A549 (cell line): ENCODE measurements at regions of chr10 and their contacts with region 1.

Region 1: GRCh38 chr10:79195091-79195923 is 126.5 kb downstream of the ZMIZ1 start:
- DNase-seq: peak; percentile 77 to 88
- ATAC-seq: peak; percentile 77 to 87
- H3K4me3 ChIP-seq: no peak overlapping the region
- H3K27ac ChIP-seq: peak overlapping the region; percentile 75 to 88
- H3K4me1 ChIP-seq: peaks cover 50% of the 10 kb centered on the region
- CTCF ChIP-seq: peak; percentile 93
- EP300 ChIP-seq: no peak
- POLR2A ChIP-seq: no peak
- RAD21 ChIP-seq: peak; percentile 94 to 99

Region 2: GRCh38 chr10:78211561-78212051 is 983.7 kb before region 1 on chr10:
- CTCF ChIA-PET with region 1: interaction called, 11 read pairs
- POLR2A ChIA-PET with region 1: no interaction called
- DNase-seq: peak; percentile 38 to 54
- ATAC-seq: peak in 1 of 2 experiments; percentile 78; a peak in 3 of 6 replicates
- H3K4me3 ChIP-seq: no peak overlapping the region
- H3K27ac ChIP-seq: peak overlapping the region; percentile 20 to 81; a peak in 5 of 6 replicates
- H3K4me1 ChIP-seq: peaks cover 11% of the 10 kb centered on the region
- CTCF ChIP-seq: peak; percentile 74
- EP300 ChIP-seq: no peak
- POLR2A ChIP-seq: no peak
- RAD21 ChIP-seq: peak; percentile 88 to 89

Region 3: GRCh38 chr10:79068562-79069324 is 126.6 kb before region 1 on chr10 and contains the start of gene ZMIZ1:
- CTCF ChIA-PET with region 1: interaction called, 373 read pairs
- POLR2A ChIA-PET with region 1: interaction called, 3 read pairs
- DNase-seq: peak; percentile 92 to 93
- ATAC-seq: peak; percentile 46 to 52
- H3K4me3 ChIP-seq: peak within 1 kb of the TSS; percentile 96
- H3K27ac ChIP-seq: peak within 1 kb of the TSS; percentile 91 to 98
- H3K4me1 ChIP-seq: peaks cover 36% of the 10 kb centered on the region
- CTCF ChIP-seq: no peak; the same call in 1 of the 3 replicates
- EP300 ChIP-seq: no peak
- POLR2A ChIP-seq: peak; percentile 62
- RAD21 ChIP-seq: peak in 1 of 2 experiments; percentile 38; a peak in 3 of 5 replicates
- polyA plus RNA-seq, gene ZMIZ1: 8.1 and 14.7 TPM in 2 replicates

Region 4: GRCh38 chr10:79127151-79127961 is 68.0 kb before region 1 on chr10:
- CTCF ChIA-PET with region 1: interaction called, 121 read pairs
- POLR2A ChIA-PET with region 1: no interaction called
- DNase-seq: peak; percentile 95 to 98
- ATAC-seq: peak; percentile 85 to 91
- H3K4me3 ChIP-seq: 0 out of 3 replicates have a peak overlapping the region, but pooled peaks have one; percentile 4
- H3K27ac ChIP-seq: peak overlapping the region; percentile 84 to 94
- H3K4me1 ChIP-seq: peaks cover 93% of the 10 kb centered on the region
- CTCF ChIP-seq: peak; percentile 19; the same call in 1 of the 3 replicates
- EP300 ChIP-seq: peak; percentile 16 to 50; a peak in 3 of 5 replicates
- POLR2A ChIP-seq: no peak
- RAD21 ChIP-seq: peak; percentile 31 to 61; a peak in 4 of 5 replicates

Region 5: GRCh38 chr10:79155301-79156081 is 39.8 kb before region 1 on chr10:
- CTCF ChIA-PET with region 1: interaction called, 154 read pairs
- POLR2A ChIA-PET with region 1: interaction called, 10 read pairs
- DNase-seq: no peak
- ATAC-seq: no peak
- H3K4me3 ChIP-seq: no peak overlapping the region
- H3K27ac ChIP-seq: peak overlapping the region; percentile 98 to 99
- H3K4me1 ChIP-seq: peaks cover 100% of the 10 kb centered on the region
- CTCF ChIP-seq: peak; percentile 11; the same call in 2 of the 3 replicates
- EP300 ChIP-seq: no peak
- POLR2A ChIP-seq: no peak
- RAD21 ChIP-seq: peak; percentile 30 to 34; a peak in 2 of 5 replicates

Region 6: GRCh38 chr10:79282388-79282787 is 87.1 kb after region 1 on chr10:
- CTCF ChIA-PET with region 1: no interaction called
- POLR2A ChIA-PET with region 1: no interaction called
- DNase-seq: no peak
- ATAC-seq: no peak
- H3K4me3 ChIP-seq: no peak overlapping the region
- H3K27ac ChIP-seq: no peak overlapping the region
- H3K4me1 ChIP-seq: no peaks in the 10 kb centered on the region
- CTCF ChIP-seq: no peak
- EP300 ChIP-seq: no peak
- POLR2A ChIP-seq: no peak
- RAD21 ChIP-seq: no peak

Region 7: DNA sequence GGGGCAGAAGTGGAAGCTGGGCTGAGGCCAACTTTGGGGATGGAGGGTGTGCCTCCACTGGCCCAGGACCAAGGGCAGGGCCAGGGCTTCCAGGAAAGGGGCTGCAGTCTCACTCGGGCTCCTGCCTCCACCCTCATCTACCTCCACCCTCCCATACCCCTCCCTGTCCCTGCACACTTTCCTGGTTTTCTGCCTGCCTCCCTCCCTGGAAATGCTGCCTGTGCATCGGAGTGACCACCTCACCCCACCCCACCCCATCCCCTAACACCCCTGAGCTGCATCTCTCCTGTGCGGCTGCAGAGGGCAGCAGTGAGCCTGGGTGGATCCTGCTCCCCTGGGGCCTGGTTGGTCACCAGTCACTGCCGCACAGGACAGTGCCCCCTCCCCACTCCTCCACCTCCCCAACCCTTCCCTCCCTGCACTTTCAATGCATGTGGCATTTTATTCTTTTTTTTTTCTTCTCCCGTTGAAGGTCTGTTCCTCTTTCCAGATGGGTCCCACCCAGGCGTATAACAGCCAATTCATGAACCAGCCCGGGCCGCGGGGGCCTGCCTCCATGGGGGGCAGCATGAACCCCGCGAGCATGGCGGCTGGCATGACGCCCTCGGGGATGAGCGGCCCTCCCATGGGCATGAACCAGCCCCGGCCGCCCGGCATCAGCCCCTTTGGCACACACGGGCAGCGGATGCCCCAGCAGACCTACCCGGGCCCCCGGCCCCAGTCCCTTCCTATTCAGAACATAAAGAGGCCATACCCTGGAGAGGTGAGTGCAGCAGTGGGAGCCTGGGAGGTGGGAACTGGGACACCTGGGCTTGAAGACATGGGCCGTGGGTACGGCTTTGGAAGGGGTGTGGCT is 97.8 kb after region 1 on chr10:
- CTCF ChIA-PET with region 1: no interaction called
- POLR2A ChIA-PET with region 1: no interaction called
- DNase-seq: peak in 1 of 2 experiments; percentile 73
- ATAC-seq: peak; percentile 43 to 74; a peak in 4 of 6 replicates
- H3K4me3 ChIP-seq: no peak overlapping the region
- H3K27ac ChIP-seq: no peak overlapping the region
- H3K4me1 ChIP-seq: peaks cover 31% of the 10 kb centered on the region
- CTCF ChIP-seq: peak; percentile 44; the same call in 2 of the 3 replicates
- EP300 ChIP-seq: no peak
- POLR2A ChIP-seq: no peak
- RAD21 ChIP-seq: peak; percentile 38 to 44; a peak in 4 of 5 replicates

Region 8: DNA sequence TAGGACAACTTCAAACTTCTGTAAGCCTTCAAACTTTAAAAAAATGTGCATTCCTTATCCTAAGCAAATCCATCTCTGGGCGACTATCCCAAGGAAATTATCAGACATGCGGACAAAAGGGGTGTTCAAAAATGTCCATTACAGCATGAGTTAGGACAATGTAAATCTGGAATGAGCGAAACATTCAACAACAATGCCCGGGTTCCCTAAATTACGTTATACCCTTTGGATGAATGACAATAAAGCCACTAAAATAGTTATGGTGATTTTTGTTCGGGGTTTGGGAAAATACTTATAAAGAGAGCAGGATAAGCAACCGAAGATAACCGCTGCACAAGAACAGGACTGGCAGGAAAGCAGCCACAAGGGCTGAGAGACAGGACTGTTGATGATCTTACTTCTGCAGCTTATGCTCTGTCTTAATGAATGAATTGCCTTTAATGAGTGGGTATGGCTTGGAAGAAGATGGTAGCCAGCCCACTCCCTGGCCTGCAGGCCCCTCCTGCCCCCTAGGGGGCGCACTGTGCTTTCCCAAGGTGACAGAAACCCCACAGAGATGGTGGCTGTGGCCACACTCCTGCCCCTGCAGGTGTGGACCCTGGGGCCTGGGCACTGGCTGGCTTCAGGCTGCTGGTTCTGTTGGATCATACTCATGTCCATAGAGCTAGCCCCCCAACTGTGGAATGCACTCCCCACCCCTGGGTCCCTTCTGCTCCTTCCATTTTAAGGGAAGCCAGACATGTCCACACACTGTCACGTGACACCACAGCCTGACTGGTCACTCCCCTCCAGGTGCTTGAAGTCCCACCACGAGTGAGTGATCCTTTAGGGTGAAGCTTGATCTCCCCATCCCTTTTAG is 205.1 kb after region 1 on chr10:
- CTCF ChIA-PET with region 1: no interaction called
- POLR2A ChIA-PET with region 1: no interaction called
- DNase-seq: peak; percentile 35 to 65
- ATAC-seq: peak; percentile 54 to 88; a peak in 5 of 6 replicates
- H3K4me3 ChIP-seq: no peak overlapping the region
- H3K27ac ChIP-seq: no peak overlapping the region
- H3K4me1 ChIP-seq: no peaks in the 10 kb centered on the region
- CTCF ChIP-seq: peak; percentile 53
- EP300 ChIP-seq: no peak
- POLR2A ChIP-seq: no peak
- RAD21 ChIP-seq: peak; percentile 40 to 71; a peak in 3 of 5 replicates